HCT116 (cell line): ENCODE measurements at regions of chr11 and their contacts with region 1.

Region 1: DNA sequence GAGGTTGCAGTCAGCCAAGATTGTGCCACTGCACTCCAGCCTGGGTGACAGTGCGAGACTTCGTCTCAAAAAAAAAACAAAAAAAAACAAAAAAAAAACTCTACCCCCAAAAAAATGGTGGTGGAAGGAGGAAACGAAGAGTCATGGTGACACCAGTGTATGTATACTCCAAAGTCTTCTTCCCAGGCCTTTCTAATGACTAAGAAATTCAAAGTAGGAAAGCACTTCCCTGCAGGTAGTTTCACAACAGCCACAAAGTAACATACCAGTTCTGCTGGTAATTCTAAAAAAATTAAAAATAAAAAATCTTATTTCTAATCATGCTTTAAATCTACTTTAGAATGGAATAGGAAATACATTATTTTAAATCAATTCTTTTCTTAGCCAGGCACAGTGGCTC is 72.6 kb downstream of the DENND5A start:
- DNase-seq: no peak
- ATAC-seq: no peak
- H3K4me3 ChIP-seq: no peak overlapping the region
- H3K27ac ChIP-seq: no peak overlapping the region
- H3K4me1 ChIP-seq: no peaks in the 10 kb centered on the region
- H3K27me3 ChIP-seq: no peaks in the 10 kb centered on the region
- CTCF ChIP-seq: no peak
- POLR2A ChIP-seq: no peak
- RAD21 ChIP-seq: no peak

Region 2: DNA sequence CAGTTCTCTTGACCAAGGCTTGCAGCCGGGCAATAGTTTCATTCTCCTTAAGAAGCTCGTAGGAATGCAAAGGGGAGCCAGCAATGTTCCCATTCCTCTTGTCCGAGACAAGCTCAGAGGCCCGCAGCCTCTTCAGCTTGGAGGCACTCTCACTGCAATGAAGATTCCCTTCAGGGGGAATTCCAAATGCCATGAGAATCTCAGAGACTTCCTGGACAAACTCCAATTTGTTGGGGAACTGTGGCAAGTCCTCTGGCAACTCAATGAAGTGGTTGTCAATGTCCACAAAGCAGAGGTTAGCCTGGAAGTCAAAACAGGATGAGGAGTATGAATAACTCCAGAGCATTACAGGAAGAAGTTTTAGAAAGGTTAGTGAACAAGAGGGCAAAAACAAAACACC is 11.8 kb before region 1 on chr11:
- CTCF ChIA-PET with region 1: no interaction called
- POLR2A ChIA-PET with region 1: no interaction called
- RAD21 ChIA-PET with region 1: no interaction called
- intact Hi-C with region 1: no loop called
- DNase-seq: no peak
- ATAC-seq: no peak
- H3K4me3 ChIP-seq: no peak overlapping the region
- H3K27ac ChIP-seq: no peak overlapping the region
- H3K4me1 ChIP-seq: no peaks in the 10 kb centered on the region
- H3K27me3 ChIP-seq: no peaks in the 10 kb centered on the region
- CTCF ChIP-seq: no peak
- POLR2A ChIP-seq: no peak
- RAD21 ChIP-seq: no peak

Region 3: DNA sequence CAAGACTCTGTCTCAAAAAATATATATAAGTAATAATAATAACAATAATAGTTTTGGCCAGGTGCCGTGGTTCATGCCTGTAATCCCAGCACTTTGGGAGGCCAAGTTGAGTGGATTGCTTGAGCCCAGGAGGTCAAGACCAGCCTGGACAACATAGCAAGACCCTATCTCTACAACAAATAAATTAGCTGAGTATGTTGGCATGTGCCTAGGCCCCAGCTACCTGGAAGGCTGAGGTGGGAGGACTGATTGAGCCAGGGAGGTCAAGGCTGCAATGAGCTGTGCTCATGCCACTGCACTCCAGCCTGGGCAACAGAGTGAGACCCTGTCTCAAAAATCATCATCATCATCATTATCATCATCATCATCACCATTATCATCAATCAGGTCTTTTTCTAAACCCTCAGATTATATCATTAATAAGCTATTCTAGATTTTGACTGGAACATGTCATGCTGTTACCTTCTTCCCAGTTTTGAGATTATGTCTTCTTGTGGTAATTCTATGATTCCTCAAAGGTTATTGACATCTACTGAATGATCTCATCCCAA is 33.3 kb after region 1 on chr11:
- CTCF ChIA-PET with region 1: no interaction called
- POLR2A ChIA-PET with region 1: no interaction called
- RAD21 ChIA-PET with region 1: no interaction called
- intact Hi-C with region 1: loop called (anchors 1 kb)
- DNase-seq: no peak
- ATAC-seq: no peak
- H3K4me3 ChIP-seq: no peak overlapping the region
- H3K27ac ChIP-seq: no peak overlapping the region
- H3K4me1 ChIP-seq: peaks cover 0 to 24% of the 10 kb centered on the region in 2 experiments; a peak in 2 of 4 replicates
- H3K27me3 ChIP-seq: no peaks in the 10 kb centered on the region
- CTCF ChIP-seq: no peak
- POLR2A ChIP-seq: no peak
- RAD21 ChIP-seq: no peak